ENCODE measurements at regions of chr6 and their contacts with region 1.

Region 1: GRCh38 chr6:125314019-125314581 is 12.3 kb upstream of the HDDC2 start:
- DNase-seq: peak; percentile 28 to 94 (median 66)

Region 2: DNA sequence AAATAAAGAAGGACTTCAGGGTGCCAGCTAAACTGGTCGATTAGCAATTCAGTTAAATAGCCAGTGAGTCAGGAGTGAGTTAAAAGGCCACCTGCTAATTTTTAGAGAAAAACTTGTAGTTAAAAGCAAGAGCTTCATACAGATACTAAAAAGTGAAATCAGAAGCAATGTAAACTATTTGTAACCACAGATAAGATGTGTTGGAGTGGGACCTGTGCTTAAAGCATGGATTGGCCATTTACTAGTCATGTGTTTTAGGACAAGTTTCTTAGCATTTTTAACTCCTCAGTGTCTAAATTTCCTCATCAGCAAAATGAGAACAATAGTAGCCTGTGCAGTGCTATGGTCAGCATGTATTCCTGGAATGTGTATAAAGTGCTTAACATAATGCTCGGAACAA is 11.5 kb after region 1 on chr6:
- intact Hi-C with region 1: no loop called
- DNase-seq: no peak

Region 3: GRCh38 chr6:125584468-125585029 is 270.4 kb after region 1 on chr6:
- intact Hi-C with region 1: loop called (anchors 10 kb)
- DNase-seq: peak; percentile 45 to 96 (median 72)

Region 4: GRCh38 chr6:125753218-125753936 is 439.3 kb after region 1 on chr6:
- intact Hi-C with region 1: loop called (anchors 5 kb)
- DNase-seq: no peak

Region 5: DNA sequence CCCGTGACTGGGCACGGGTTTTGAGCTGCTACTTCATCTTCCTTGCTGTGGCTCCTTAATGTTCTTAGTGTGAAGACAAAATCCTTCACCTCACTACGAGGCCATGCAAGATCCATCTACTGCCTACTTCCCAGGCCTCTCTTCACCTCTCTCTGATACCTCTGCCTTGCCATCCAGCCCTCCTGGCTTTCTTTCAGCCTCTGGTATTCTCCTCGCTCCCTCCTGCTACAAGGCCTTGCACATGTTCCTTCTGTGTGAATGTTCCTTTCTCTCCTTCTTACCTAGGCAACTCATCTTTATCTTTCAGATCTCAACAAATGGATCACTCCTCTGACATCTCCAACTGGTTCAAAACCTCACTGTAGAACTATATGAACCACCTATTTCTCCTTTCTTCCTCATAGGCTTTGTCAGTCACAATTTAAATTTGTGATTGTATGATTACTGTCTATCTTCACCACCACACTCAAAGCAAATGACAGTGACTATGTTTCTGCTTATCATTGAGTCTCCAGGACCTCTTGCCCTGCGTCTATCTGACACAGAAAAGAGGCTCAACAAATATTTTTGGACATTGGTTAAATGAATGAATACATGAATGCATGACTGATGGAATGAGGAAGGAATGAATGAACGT is 455.2 kb after region 1 on chr6:
- intact Hi-C with region 1: loop called (anchors 1 kb)
- DNase-seq: no peak

Region 6: DNA sequence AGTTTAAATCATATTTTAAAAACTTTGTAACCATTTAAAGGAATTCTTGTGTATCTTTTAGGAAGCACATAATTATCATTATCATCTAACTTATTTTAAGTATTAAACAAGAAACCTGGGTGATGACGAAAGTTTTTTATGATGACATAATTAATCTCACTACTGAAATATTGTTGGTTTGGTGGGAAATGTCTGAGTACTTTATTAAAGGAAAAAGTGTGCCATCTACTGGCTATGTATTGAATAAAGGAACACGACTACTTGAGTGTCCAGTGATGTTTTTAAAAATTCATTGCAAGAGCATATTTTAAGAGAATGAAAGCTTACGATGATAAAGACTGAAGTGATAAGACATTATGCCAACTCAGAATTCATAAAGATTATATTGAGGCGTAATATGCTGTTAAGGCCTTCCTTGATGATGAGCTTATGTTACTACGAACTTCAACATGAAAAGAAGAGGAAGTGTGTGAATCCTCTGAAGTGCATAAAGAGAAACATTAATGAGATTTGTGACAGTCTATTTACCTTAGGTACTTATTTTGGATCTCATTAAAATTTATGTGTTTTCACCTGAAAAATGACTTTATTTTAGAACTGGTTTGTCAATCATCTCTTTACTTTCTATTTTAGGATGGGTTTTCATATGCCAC is 660.2 kb after region 1 on chr6:
- intact Hi-C with region 1: loop called (anchors 5 kb)
- DNase-seq: no peak

Measured in posterior cingulate gyrus (tissue), 11 donors.